Gastrocnemius medialis (tissue), 4 donors: ENCODE measurements at regions of chr6 and their contacts with region 1.

Region 1: DNA sequence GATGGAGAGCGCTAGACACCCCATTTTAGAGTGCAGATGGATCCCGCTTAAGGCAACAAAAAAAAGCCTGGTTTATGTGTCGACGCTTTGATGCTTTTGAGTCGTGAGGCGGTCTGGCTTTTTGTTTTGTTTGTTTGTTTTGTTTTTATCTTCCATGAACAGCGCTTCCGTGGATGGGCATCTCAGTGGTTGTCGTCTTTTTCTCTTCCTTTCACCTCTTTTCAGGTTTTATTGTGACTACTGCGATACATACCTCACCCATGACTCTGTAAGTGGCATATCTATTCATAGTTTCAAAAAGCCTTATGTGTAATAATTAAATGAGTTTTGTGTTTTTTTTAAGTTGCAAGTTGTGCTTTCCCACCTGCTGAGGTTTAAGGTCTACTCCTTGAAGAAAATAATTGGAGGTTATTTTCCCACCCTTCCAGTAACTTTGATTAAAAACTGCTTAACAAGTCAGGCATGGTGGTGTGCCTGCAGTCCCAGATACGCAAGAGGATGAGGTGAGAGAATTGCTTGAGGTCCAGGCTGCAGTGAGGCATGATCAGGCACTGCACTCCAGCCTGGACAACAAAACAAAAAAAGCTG is 476 bp downstream of the SNRPC start:
- DNase-seq: no peak
- ATAC-seq: no peak
- H3K4me3 ChIP-seq: peak overlapping the region; percentile 62 to 87 (median 76)
- H3K27ac ChIP-seq: peak overlapping the region; percentile 91 to 94 (median 92)
- H3K4me1 ChIP-seq: peaks cover 8% of the 10 kb centered on the region in 2 donors
- H3K27me3 ChIP-seq: no peaks in the 10 kb centered on the region
- CTCF ChIP-seq: no peak
- POLR2A ChIP-seq: no peak

Region 2: DNA sequence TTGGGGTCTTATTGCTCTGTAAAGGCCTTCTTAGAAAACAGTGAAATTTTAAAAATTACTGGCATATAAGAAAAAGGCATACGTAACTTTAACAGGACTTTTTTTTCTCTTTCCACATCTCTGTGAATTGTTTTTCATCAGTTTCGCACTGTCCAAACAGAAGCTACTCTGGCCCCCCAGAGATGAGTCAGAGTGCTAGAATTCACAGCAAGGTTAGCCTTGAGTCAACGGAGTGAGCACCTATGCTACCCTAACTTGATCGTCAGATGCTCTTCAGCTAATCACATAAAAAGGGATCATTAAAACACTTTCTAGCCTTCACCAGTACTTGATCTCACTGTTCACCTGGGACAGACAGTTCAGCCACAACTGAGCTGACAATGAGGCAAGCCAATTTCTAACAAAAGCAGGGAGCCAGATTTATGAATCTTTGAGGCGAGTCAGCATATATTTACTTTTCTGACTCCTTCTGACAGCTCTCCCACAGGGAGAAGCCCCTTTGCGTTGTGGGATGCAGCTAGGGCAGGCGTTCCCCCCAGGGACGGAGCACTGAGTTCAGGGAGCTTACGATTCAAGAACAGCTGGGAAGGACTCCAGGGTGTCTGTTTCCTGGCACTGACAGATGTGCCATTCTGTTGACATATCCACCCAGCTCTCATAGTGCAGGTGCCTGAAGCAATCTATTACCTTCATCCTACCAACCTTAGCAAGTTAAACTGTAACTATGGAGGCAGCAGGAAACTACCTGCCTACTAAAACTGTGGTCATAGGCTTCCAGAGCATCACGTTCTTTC is 155.3 kb before region 1 on chr6:
- in situ Hi-C with region 1: no loop called
- intact Hi-C with region 1: loop called (anchors 10 kb)
- DNase-seq: peak; percentile 63 to 76
- ATAC-seq: peak; percentile 72 to 73
- H3K4me3 ChIP-seq: no peak overlapping the region
- H3K27ac ChIP-seq: peak overlapping the region; percentile 65 to 92 (median 80)
- H3K4me1 ChIP-seq: peaks cover 68 to 71% of the 10 kb centered on the region in 2 donors
- H3K27me3 ChIP-seq: no peaks in the 10 kb centered on the region
- CTCF ChIP-seq: no peak
- POLR2A ChIP-seq: no peak

Region 3: GRCh38 chr6:34656378-34657036 is 101.3 kb before region 1 on chr6:
- in situ Hi-C with region 1: no loop called
- intact Hi-C with region 1: loop called (anchors 1 kb)
- DNase-seq: peak; percentile 50 to 63
- ATAC-seq: peak; percentile 73 to 82
- H3K4me3 ChIP-seq: peak overlapping the region; percentile 51 to 60 (median 58)
- H3K27ac ChIP-seq: peak overlapping the region; percentile 92 to 97 (median 94)
- H3K4me1 ChIP-seq: peaks cover 59 to 62% of the 10 kb centered on the region in 2 donors
- H3K27me3 ChIP-seq: no peaks in the 10 kb centered on the region
- CTCF ChIP-seq: no peak
- POLR2A ChIP-seq: no peak

Region 4: DNA sequence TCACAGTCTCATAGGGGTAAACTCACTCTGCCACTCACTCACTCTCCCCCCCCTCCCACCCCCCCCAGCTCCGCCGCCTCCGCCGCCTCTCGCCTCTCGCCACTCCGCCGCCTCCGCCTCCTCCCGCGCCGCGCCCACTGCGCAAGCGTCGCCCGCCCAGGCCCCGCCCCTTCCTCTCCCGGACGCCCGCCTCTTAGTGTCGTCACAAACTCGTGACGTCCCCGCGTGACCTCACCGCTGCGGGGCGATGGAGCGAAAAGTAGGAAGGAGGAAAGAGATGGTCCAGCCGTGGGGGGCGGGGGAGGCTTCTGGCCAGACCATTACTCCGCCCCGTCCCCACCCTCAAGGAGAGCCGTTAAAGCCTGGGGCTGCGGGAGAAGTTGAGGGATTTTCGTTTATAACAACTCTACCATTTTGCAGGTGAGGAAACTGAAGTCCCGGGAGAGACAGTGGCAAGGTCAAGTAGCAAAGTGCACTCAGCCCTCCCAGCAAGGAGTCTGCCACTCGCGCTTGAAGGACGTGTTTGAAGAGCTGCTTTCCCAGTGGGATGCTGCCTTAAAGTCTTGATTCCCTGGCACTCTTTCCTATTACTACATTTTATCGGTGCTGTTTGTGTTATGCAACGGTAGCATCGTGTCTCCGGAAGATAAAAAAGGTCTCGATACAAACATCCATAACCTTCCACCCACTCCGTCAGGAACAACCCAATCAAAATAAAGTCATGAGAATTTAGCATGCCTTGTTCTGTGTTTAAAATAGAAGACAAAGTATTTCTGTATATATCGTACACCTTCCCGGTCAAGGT is 60.8 kb before region 1 on chr6 and contains the start of gene ILRUN:
- in situ Hi-C with region 1: no loop called
- intact Hi-C with region 1: loop called (anchors 1 kb)
- DNase-seq: peak; percentile 92 to 94
- ATAC-seq: peak; percentile 78 to 80
- H3K4me3 ChIP-seq: peak within 1 kb of the TSS; percentile 79 to 100 (median 95)
- H3K27ac ChIP-seq: peak within 1 kb of the TSS; percentile 99 to 100 (median 100)
- H3K4me1 ChIP-seq: peaks cover 30 to 31% of the 10 kb centered on the region in 2 donors
- H3K27me3 ChIP-seq: no peaks in the 10 kb centered on the region
- CTCF ChIP-seq: no peak
- POLR2A ChIP-seq: peak; percentile 76 to 87
- total RNA-seq, gene ILRUN: 136 to 252 (median 169) TPM

Region 5: GRCh38 chr6:34791701-34792235 is 34.0 kb after region 1 on chr6 and contains the start of gene BLTP3A:
- in situ Hi-C with region 1: no loop called
- intact Hi-C with region 1: loop called (anchors 1 kb)
- DNase-seq: peak; percentile 41 to 66
- ATAC-seq: peak; percentile 85 to 87
- H3K4me3 ChIP-seq: peak within 1 kb of the TSS; percentile 87 to 95 (median 93)
- H3K27ac ChIP-seq: peak within 1 kb of the TSS; percentile 93 to 98 (median 96)
- H3K4me1 ChIP-seq: peaks cover 5 to 14% of the 10 kb centered on the region in 2 donors
- H3K27me3 ChIP-seq: no peaks in the 10 kb centered on the region
- CTCF ChIP-seq: peak in 3 of 5 experiments; percentile 11 to 34 (median 28)
- POLR2A ChIP-seq: peak; percentile 72 to 85
- total RNA-seq, gene BLTP3A: 19.9 to 36.0 (median 23.2) TPM

Region 6: GRCh38 chr6:34810936-34811632 is 53.3 kb after region 1 on chr6:
- in situ Hi-C with region 1: no loop called
- intact Hi-C with region 1: no loop called
- DNase-seq: peak in 1 of 2 donors; percentile 25
- ATAC-seq: peak; percentile 72 to 90
- H3K4me3 ChIP-seq: no peak overlapping the region
- H3K27ac ChIP-seq: peak overlapping the region in 1 of 4 donors; percentile 56
- H3K4me1 ChIP-seq: peaks cover 21 to 44% of the 10 kb centered on the region in 2 donors
- H3K27me3 ChIP-seq: no peaks in the 10 kb centered on the region
- CTCF ChIP-seq: no peak
- POLR2A ChIP-seq: no peak

Region 7: GRCh38 chr6:34887753-34888513 is 130.2 kb after region 1 on chr6 and contains the start of gene TAF11:
- in situ Hi-C with region 1: loop called in 1 of 4 experiments (anchors 10 kb)
- intact Hi-C with region 1: loop called (anchors 1 kb)
- DNase-seq: peak; percentile 90 to 93
- ATAC-seq: peak; percentile 93 to 94
- H3K4me3 ChIP-seq: peak within 1 kb of the TSS; percentile 90 to 96 (median 94)
- H3K27ac ChIP-seq: peak within 1 kb of the TSS; percentile 82 to 89 (median 88)
- H3K4me1 ChIP-seq: peaks cover 20 to 23% of the 10 kb centered on the region in 2 donors
- H3K27me3 ChIP-seq: no peaks in the 10 kb centered on the region
- CTCF ChIP-seq: peak in 1 of 5 experiments; percentile 18
- POLR2A ChIP-seq: peak; percentile 70 to 79
- total RNA-seq, gene TAF11: 23.2 to 32.6 (median 24.0) TPM